Aorta (tissue), 5 donors: ENCODE measurements at regions of chr5 and their contacts with region 1.

Region 1: GRCh38 chr5:96336351-96336985 is 96.6 kb downstream of the PCSK1 start:
- DNase-seq: peak in 1 of 2 donors; percentile 70
- ATAC-seq: peak; percentile 86
- H3K4me3 ChIP-seq: no peak overlapping the region
- H3K27ac ChIP-seq: no peak overlapping the region
- H3K4me1 ChIP-seq: peaks cover 5 to 20% of the 10 kb centered on the region in 2 donors
- H3K27me3 ChIP-seq: no peaks in the 10 kb centered on the region

Region 2: DNA sequence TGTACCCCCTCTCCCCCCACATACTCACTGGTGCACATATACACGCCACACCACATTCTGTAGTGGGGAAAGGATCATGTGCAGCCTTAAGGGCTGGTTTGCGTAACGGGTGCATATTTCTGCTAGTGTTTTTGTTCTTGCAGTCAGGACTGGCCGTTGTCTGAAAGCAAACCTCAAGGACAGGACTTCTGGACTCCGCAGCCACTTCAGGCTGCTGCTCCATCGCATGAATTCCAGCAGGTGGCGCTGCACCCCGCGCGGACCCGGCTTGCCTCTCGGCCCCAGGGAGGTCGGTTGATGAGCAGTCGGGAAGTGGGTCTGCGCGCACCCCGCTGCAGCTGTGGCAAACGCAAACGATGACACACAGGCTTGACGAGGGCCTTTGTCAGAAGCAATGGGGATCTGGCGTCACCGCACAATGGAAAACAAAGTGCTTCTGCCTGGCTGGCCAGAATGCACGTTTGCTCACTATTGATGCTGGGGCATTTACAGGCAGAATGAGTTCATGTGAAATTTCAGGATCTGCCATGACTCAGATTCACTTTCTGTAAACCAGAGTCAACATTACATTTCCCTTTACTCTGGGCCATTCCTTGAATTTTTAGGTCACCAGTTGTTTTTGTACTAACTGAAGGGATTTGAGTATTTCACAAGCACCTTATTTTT is 477.7 kb before region 1 on chr5:
- intact Hi-C with region 1: loop called (anchors 1 to 2 kb)
- DNase-seq: peak; percentile 97 to 98
- ATAC-seq: peak; percentile 95
- H3K4me3 ChIP-seq: peak overlapping the region; percentile 9 to 27
- H3K27ac ChIP-seq: peak overlapping the region; percentile 47 to 100
- H3K4me1 ChIP-seq: peaks cover 0 to 7% of the 10 kb centered on the region in 2 donors
- H3K27me3 ChIP-seq: no peaks in the 10 kb centered on the region

Region 3: DNA sequence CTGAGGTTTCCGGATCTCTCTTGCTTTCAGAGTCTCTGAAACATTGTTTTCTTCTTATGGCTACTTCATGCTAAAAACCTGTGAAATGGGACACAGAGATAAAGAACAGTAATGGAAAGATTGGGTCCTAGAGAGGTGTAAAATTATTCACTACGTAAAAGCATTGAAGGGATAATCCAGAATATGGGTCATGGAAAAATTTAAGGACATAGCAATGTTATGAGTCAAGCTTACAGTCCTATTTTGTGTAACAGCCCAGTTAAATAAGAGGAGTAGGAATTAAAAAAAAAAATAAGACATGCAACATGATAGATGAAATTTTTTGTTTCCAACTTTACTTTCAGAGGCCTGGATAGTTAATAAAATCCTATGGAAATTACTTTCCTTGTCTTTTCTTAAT is 312.9 kb before region 1 on chr5:
- intact Hi-C with region 1: loop called in 1 of 2 experiments (anchors 10 kb)
- DNase-seq: no peak
- ATAC-seq: peak; percentile 80
- H3K4me3 ChIP-seq: no peak overlapping the region
- H3K27ac ChIP-seq: no peak overlapping the region
- H3K4me1 ChIP-seq: peaks cover 0 to 6% of the 10 kb centered on the region in 2 donors
- H3K27me3 ChIP-seq: no peaks in the 10 kb centered on the region

Region 4: DNA sequence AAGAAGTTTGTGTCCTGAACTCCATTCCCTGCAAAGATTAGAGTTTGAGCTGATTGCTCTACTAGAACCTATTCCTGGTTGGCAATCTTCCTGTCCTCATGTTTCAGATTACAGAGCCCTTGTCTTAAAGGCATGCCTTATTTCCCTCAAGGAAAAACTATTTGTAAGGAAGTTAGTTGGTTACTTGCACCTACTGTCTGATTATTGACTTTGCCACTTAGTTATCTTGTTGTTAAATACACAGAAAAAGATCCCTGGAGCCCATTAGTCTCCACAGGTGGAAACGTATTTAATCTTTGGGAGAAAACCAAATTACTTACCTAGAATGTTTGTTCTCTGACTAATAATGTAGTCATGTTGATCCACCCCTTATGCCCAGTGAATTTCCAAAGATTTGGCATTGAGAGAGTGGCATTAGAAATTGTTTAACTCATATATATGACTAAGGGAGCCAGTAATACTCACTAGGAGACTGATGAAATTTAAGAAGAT is 242.5 kb before region 1 on chr5:
- intact Hi-C with region 1: loop called in 1 of 2 experiments (anchors 10 kb)
- DNase-seq: no peak
- ATAC-seq: no peak
- H3K4me3 ChIP-seq: no peak overlapping the region
- H3K27ac ChIP-seq: no peak overlapping the region
- H3K4me1 ChIP-seq: peaks cover 2 to 10% of the 10 kb centered on the region in 2 donors
- H3K27me3 ChIP-seq: no peaks in the 10 kb centered on the region

Region 5: DNA sequence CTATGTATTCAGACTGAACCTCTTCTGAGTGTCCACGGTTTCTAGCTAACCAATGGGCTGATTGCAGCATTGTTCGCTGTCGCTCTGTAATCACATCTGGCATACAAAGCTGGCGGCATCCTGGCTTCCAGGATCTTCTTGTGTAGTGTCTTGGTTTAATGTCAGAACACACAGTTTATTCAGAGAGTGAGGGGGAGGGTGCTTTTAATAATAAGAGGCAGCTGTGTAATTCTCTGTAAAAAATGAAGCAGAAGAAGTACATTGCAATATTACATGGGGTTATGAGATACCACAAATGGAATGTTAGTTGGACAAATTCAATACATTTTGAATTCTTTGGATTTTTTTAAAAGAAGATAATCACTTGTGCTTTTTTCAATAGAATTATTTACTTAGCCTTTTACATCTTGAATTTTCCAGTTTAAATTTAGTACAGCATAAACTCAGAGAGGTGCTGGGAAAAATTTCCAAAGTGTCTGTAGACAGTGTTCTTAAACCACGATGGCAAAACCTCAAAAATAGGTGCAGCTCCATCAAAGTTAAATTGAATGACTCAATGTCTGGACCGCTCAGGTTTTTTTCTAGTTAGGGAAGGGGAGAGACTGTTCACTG is 109.4 kb before region 1 on chr5:
- intact Hi-C with region 1: loop called (anchors 10 kb)
- DNase-seq: peak; percentile 54 to 76
- ATAC-seq: peak; percentile 50
- H3K4me3 ChIP-seq: peak overlapping the region in 1 of 2 donors; percentile 64
- H3K27ac ChIP-seq: peak overlapping the region; percentile 38 to 95
- H3K4me1 ChIP-seq: peaks cover 0 to 3% of the 10 kb centered on the region in 2 donors
- H3K27me3 ChIP-seq: no peaks in the 10 kb centered on the region